Caco-2 (cell line): ENCODE measurements at regions of chr1 and their contacts with region 1.

Region 1: GRCh38 chr1:154558575-154559465 is at the start of gene UBE2Q1:
- DNase-seq: peak; percentile 98 to 99
- H3K4me3 ChIP-seq: peak within 1 kb of the TSS; percentile 85
- H3K4me3 Mint-ChIP-seq: peak within 1 kb of the TSS; percentile 90
- H3K27ac Mint-ChIP-seq: peak within 1 kb of the TSS; percentile 91
- H3K4me1 ChIP-seq: peaks cover 13% of the 10 kb centered on the region
- H3K4me1 Mint-ChIP-seq: peaks cover 13% of the 10 kb centered on the region
- H3K27me3 ChIP-seq: no peaks in the 10 kb centered on the region
- H3K27me3 Mint-ChIP-seq: no peaks in the 10 kb centered on the region
- CTCF ChIP-seq: no peak
- total RNA-seq, gene UBE2Q1: 92.2 and 93.2 TPM in 2 replicates

Region 2: GRCh38 chr1:153688276-153688675 is 870.5 kb before region 1 on chr1:
- CTCF ChIA-PET with region 1: no interaction called
- POLR2A ChIA-PET with region 1: no interaction called
- intact Hi-C with region 1: no loop called
- DNase-seq: no peak
- H3K4me3 ChIP-seq: no peak overlapping the region
- H3K4me3 Mint-ChIP-seq: no peak overlapping the region
- H3K27ac Mint-ChIP-seq: peak overlapping the region; percentile 8
- H3K4me1 ChIP-seq: no peaks in the 10 kb centered on the region
- H3K4me1 Mint-ChIP-seq: peaks cover 7% of the 10 kb centered on the region
- H3K27me3 ChIP-seq: no peaks in the 10 kb centered on the region
- H3K27me3 Mint-ChIP-seq: no peaks in the 10 kb centered on the region
- CTCF ChIP-seq: no peak

Region 3: GRCh38 chr1:154253671-154254070 is 305.1 kb before region 1 on chr1:
- CTCF ChIA-PET with region 1: no interaction called
- POLR2A ChIA-PET with region 1: no interaction called
- intact Hi-C with region 1: no loop called
- DNase-seq: no peak
- H3K4me3 ChIP-seq: no peak overlapping the region
- H3K4me3 Mint-ChIP-seq: no peak overlapping the region
- H3K27ac Mint-ChIP-seq: no peak overlapping the region
- H3K4me1 ChIP-seq: no peaks in the 10 kb centered on the region
- H3K4me1 Mint-ChIP-seq: no peaks in the 10 kb centered on the region
- H3K27me3 ChIP-seq: no peaks in the 10 kb centered on the region
- H3K27me3 Mint-ChIP-seq: no peaks in the 10 kb centered on the region
- CTCF ChIP-seq: no peak

Region 4: DNA sequence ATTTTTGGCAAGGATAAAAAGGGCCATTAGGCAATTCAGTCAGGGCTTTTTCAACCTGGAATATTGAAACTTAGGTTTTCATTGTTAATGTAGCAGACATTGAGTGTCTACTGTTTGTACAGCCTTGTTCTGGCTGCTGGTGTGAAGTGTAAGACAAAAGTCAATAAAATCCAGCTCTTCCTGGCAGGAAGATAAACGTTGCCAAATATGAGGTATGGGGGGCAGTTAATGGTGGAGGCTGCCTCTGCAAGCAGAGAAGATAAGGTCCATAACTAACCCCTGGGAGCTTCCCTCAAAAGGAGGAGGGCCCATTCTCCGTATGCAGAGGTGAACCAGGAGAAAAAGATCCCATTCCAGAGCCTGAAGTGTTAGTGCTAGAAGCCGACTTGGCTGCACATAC is 37.1 kb before region 1 on chr1:
- CTCF ChIA-PET with region 1: no interaction called
- POLR2A ChIA-PET with region 1: no interaction called
- intact Hi-C with region 1: no loop called
- DNase-seq: no peak
- H3K4me3 ChIP-seq: no peak overlapping the region
- H3K4me3 Mint-ChIP-seq: no peak overlapping the region
- H3K27ac Mint-ChIP-seq: no peak overlapping the region
- H3K4me1 ChIP-seq: no peaks in the 10 kb centered on the region
- H3K4me1 Mint-ChIP-seq: no peaks in the 10 kb centered on the region
- H3K27me3 ChIP-seq: peaks cover 2% of the 10 kb centered on the region; the same call in 1 of the 2 replicates
- H3K27me3 Mint-ChIP-seq: peaks cover 2% of the 10 kb centered on the region
- CTCF ChIP-seq: no peak

Region 5: GRCh38 chr1:154546264-154547063 is 12.4 kb before region 1 on chr1:
- CTCF ChIA-PET with region 1: interaction called, 11 read pairs
- POLR2A ChIA-PET with region 1: no interaction called
- intact Hi-C with region 1: no loop called
- DNase-seq: peak; percentile 73 to 80
- H3K4me3 ChIP-seq: no peak overlapping the region
- H3K4me3 Mint-ChIP-seq: no peak overlapping the region
- H3K27ac Mint-ChIP-seq: no peak overlapping the region
- H3K4me1 ChIP-seq: no peaks in the 10 kb centered on the region
- H3K4me1 Mint-ChIP-seq: peaks cover 9% of the 10 kb centered on the region
- H3K27me3 ChIP-seq: no peaks in the 10 kb centered on the region
- H3K27me3 Mint-ChIP-seq: peaks cover 7% of the 10 kb centered on the region
- CTCF ChIP-seq: peak; percentile 70 to 83

Region 6: GRCh38 chr1:154669464-154670282 is 110.9 kb after region 1 on chr1:
- CTCF ChIA-PET with region 1: interaction called, 11 read pairs
- POLR2A ChIA-PET with region 1: no interaction called
- intact Hi-C with region 1: loop called (anchors 2 kb)
- DNase-seq: peak; percentile 74 to 75
- H3K4me3 ChIP-seq: no peak overlapping the region
- H3K4me3 Mint-ChIP-seq: no peak overlapping the region
- H3K27ac Mint-ChIP-seq: no peak overlapping the region
- H3K4me1 ChIP-seq: no peaks in the 10 kb centered on the region
- H3K4me1 Mint-ChIP-seq: no peaks in the 10 kb centered on the region
- H3K27me3 ChIP-seq: no peaks in the 10 kb centered on the region
- H3K27me3 Mint-ChIP-seq: peaks cover 3% of the 10 kb centered on the region
- CTCF ChIP-seq: peak; percentile 77 to 87

Region 7: GRCh38 chr1:154760469-154760933 is 201.7 kb after region 1 on chr1:
- CTCF ChIA-PET with region 1: interaction called, 4 read pairs
- POLR2A ChIA-PET with region 1: no interaction called
- intact Hi-C with region 1: loop called (anchors 2 kb)
- DNase-seq: peak; percentile 79 to 91
- H3K4me3 ChIP-seq: peak overlapping the region; percentile 56
- H3K4me3 Mint-ChIP-seq: peak overlapping the region; percentile 59
- H3K27ac Mint-ChIP-seq: no peak overlapping the region
- H3K4me1 ChIP-seq: no peaks in the 10 kb centered on the region; the same call in 1 of the 2 replicates
- H3K4me1 Mint-ChIP-seq: peaks cover 5% of the 10 kb centered on the region
- H3K27me3 ChIP-seq: no peaks in the 10 kb centered on the region
- H3K27me3 Mint-ChIP-seq: peaks cover 39% of the 10 kb centered on the region
- CTCF ChIP-seq: peak; percentile 82 to 93

Region 8: DNA sequence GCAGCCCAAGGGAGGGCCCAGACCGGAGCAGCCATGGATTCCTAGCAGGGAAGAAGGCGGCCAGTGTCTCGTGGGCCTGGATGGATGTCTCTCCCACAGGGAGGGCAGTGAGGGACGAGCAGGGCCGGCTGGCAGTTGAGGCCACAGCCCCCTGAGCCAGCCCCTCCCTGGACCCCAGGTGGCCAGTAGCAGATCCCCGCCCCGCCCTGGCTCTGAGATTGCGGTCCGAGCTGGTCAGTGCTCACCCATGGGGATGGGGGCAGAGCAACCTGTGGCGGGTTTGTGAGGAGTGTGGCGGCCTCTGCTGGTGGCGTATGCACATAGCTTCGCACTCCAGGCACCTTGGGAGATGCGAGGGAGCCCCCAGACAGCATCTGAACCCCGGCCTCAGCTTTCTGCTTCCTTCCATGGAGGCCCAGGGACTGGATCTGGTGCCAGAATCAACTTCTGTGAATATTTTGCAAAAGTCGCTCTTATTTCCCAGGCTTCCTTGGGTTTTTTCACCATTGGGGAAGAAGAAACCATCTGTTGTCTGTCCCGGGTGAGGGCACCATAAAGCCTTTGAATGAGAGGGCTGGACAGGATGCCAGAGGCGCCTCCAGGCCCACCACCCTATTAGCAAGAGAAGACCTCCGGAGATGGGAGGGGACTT is 319.7 kb after region 1 on chr1:
- CTCF ChIA-PET with region 1: interaction called, 23 read pairs
- POLR2A ChIA-PET with region 1: no interaction called
- intact Hi-C with region 1: loop called (anchors 2 kb)
- DNase-seq: peak; percentile 81 to 85
- H3K4me3 ChIP-seq: no peak overlapping the region
- H3K4me3 Mint-ChIP-seq: no peak overlapping the region
- H3K27ac Mint-ChIP-seq: no peak overlapping the region
- H3K4me1 ChIP-seq: peaks cover 12% of the 10 kb centered on the region
- H3K4me1 Mint-ChIP-seq: peaks cover 10% of the 10 kb centered on the region
- H3K27me3 ChIP-seq: no peaks in the 10 kb centered on the region
- H3K27me3 Mint-ChIP-seq: no peaks in the 10 kb centered on the region
- CTCF ChIP-seq: peak; percentile 84 to 91